PC-9 (cell line): ENCODE measurements at regions of chr5 and their contacts with region 1.

Region 1: GRCh38 chr5:14156650-14157493 is 13.7 kb downstream of the TRIO start:
- DNase-seq: peak; percentile 83 to 99
- H3K4me3 ChIP-seq: peak overlapping the region; percentile 45; the same call in 1 of the 2 replicates
- H3K27ac ChIP-seq: peak overlapping the region; percentile 87
- H3K4me1 ChIP-seq: peaks cover 76% of the 10 kb centered on the region
- H3K27me3 ChIP-seq: no peaks in the 10 kb centered on the region
- CTCF ChIP-seq: no peak; the same call in 1 of the 2 replicates

Region 2: GRCh38 chr5:12743582-12743981 is 1413.3 kb before region 1 on chr5:
- CTCF ChIA-PET with region 1: no interaction called
- POLR2A ChIA-PET with region 1: no interaction called
- intact Hi-C with region 1: no loop called
- DNase-seq: no peak
- H3K4me3 ChIP-seq: no peak overlapping the region
- H3K27ac ChIP-seq: no peak overlapping the region
- H3K4me1 ChIP-seq: no peaks in the 10 kb centered on the region
- H3K27me3 ChIP-seq: no peaks in the 10 kb centered on the region
- CTCF ChIP-seq: no peak

Region 3: DNA sequence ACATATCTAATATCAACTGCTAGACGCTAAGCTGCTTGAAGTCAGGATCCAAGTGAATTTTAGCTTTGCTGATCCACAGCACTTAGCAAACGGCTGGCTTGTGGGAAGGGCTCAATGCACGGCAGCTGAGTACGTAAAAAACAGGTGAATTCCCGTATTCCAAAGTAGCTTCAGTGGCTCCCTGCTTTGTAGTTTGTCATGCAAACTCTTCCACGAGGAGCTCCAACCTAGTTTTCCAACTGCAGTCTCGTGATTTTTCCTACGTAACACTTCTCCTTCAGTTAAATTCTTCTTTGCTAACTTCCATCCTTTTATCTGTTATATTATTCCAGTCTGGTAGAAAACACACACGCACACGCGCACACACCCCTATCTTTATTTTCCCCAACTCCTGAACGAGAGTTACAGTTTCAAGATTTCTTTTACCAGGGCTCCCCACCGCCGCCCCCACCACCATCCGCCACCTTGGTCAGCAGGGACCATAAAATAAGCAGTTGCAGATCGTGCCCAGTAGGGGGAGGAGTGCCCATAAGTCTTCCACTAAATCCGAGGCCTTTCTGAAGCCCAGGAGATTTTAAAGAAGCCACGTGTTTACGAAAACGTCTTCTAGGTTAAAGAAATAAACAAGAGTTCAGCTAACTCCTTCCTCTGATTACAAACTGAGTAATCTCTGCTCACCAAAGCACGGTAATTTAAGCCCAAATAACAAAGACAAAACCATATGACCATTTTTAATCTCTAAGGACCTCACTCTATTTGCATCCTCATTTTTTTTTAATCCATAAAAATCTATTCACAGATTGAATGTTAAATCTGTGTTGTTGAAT is 48.5 kb before region 1 on chr5:
- CTCF ChIA-PET with region 1: no interaction called
- POLR2A ChIA-PET with region 1: interaction called, 6 read pairs
- intact Hi-C with region 1: loop called (anchors 1 kb)
- DNase-seq: peak in 1 of 2 experiments; percentile 81
- H3K4me3 ChIP-seq: no peak overlapping the region
- H3K27ac ChIP-seq: peak overlapping the region; percentile 22; the same call in 1 of the 2 replicates
- H3K4me1 ChIP-seq: peaks cover 10% of the 10 kb centered on the region
- H3K27me3 ChIP-seq: no peaks in the 10 kb centered on the region
- CTCF ChIP-seq: peak; percentile 59

Region 4: DNA sequence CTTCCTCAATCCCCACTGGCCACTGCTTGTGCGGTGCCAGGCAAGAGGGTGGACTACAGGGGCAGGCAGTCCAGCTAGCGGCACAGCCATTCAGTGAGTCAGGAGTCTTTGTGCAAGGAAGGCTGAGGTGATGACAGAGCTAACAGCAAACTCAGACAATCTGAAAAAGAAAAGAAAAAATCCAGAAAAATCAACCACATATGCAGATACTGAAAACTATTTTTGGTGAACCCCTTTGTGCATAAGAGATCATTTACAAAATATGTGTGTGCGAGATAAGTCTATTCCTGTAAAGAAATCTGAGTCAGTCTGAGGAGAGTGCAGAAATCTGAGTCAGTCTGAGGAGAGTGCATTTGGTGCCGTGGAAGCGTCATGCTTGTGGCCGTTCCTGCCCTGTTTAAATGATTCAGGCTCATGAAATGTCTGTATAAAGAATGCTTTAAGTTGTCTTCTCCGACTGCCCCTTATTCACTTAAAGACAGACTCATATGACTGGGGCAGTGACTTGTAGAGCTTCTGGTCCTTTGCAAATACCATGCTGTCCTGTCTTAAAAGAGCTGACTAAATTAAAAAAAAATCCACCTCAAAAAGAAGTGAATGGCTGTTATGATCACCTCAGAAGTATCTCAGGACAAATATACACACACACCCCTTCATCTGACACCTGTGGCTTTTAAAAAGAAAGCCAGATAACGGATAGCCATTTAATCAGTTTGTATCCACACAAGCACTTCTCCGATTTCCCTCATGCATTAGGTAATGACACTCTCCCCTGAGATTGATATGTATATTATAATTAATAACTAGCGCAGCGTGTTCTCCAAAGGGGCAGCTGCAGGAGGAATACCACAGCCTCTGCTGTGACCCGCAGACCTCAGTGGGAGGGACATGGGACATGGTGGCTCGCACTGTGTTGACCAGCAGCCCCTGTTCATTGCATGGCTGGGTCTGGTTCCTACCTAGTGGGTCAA is 33.6 kb after region 1 on chr5:
- CTCF ChIA-PET with region 1: interaction called, 12 read pairs
- POLR2A ChIA-PET with region 1: interaction called, 12 read pairs
- intact Hi-C with region 1: loop called (anchors 1 kb)
- DNase-seq: peak; percentile 87 to 98
- H3K4me3 ChIP-seq: peak overlapping the region; percentile 30; the same call in 1 of the 2 replicates
- H3K27ac ChIP-seq: peak overlapping the region; percentile 92
- H3K4me1 ChIP-seq: peaks cover 79% of the 10 kb centered on the region
- H3K27me3 ChIP-seq: no peaks in the 10 kb centered on the region
- CTCF ChIP-seq: no peak

Region 5: DNA sequence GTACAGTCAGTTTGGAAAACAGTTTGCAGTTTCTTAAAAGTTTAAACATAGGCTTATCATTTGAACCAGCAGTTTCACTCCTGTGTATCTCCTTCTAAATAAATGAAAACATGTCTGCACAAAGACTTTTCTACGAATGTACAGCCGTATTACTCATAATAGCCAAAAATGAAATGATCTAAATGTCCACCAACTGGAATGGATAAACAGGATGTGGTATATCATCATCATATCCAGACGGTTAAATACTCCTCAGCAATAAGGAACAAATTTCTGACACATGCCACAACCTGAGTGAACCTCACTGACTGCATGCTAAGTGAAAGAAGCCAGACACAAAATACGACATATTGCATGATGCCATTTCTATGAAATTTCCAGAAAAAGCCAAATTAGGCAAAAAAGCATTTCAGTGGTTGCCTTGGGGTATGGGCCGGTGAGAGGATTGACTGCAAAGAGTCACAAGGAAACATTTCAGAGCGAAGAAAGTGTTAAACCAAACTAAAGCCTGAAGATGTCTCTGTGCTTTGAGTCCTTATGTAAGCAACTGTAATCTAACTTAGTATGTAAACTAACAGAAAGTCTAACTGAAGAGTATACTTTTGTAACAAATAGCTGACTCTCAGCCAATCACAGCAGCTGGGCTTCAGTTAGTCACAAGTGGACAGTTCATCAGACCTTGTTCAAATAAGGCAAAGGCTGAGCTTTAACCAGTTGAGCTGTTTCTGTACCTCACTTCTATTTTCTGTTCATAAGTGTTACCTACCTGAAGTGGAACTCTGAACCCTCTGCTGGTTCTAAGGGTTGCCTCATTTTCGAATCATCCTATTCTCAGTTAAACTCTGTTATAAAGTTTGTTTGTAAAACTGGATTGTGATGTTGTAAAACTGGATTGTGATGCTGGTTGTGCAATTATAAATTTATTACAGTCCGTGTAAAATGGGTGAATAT is 51.5 kb after region 1 on chr5:
- CTCF ChIA-PET with region 1: no interaction called
- POLR2A ChIA-PET with region 1: interaction called, 10 read pairs
- intact Hi-C with region 1: no loop called
- DNase-seq: peak in 1 of 2 experiments; percentile 34
- H3K4me3 ChIP-seq: no peak overlapping the region
- H3K27ac ChIP-seq: peak overlapping the region; percentile 21; the same call in 1 of the 2 replicates
- H3K4me1 ChIP-seq: peaks cover 23% of the 10 kb centered on the region
- H3K27me3 ChIP-seq: no peaks in the 10 kb centered on the region
- CTCF ChIP-seq: no peak

Region 6: GRCh38 chr5:14264604-14265316 is 107.9 kb after region 1 on chr5:
- CTCF ChIA-PET with region 1: interaction called, 22 read pairs
- POLR2A ChIA-PET with region 1: interaction called, 28 read pairs
- intact Hi-C with region 1: no loop called
- DNase-seq: peak; percentile 90 to 99
- H3K4me3 ChIP-seq: peak overlapping the region; percentile 52
- H3K27ac ChIP-seq: peak overlapping the region; percentile 88
- H3K4me1 ChIP-seq: peaks cover 62% of the 10 kb centered on the region
- H3K27me3 ChIP-seq: no peaks in the 10 kb centered on the region
- CTCF ChIP-seq: no peak

Region 7: DNA sequence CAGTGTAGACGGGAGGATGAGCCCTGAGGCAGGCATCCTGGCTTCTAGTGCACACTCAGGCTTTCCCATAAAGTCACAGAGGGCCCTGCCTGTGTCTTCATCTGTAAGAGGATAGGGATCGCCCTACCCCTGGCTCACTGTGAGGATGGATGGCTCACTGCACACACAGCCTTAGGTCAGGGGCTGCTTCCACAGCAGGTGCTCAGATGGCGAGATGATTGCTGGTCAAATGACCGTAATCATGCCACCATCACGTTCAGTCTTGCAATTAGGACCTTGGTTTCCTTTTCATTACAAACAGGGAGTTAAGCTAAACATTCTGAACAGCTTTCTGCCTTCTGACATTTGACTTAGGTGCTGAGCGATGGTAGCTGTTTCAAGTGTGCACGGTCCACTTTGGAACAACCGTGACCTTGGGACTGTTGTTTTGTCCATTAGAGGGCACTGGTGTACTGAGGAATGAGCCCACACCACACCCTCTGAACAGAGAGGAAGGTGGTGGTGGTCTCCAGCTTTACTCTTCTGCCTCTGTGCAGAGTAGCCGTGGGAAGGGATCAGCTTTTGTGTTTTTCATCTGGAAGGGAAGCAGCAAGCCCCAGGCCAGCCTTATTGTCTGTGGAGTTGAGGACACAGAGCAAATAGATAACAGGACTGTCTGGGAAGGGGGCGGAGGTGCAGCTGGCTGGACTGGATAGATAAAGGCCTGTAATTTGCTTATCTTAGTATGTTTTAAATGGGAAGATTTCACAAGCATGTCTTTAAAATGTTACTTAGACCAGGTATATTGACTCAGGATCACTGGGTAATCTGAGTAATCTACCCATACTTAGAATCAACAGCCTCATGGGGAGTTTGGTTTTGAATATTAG is 169.4 kb after region 1 on chr5:
- CTCF ChIA-PET with region 1: no interaction called
- POLR2A ChIA-PET with region 1: no interaction called
- intact Hi-C with region 1: no loop called
- DNase-seq: no peak
- H3K4me3 ChIP-seq: no peak overlapping the region
- H3K27ac ChIP-seq: no peak overlapping the region
- H3K4me1 ChIP-seq: no peaks in the 10 kb centered on the region
- H3K27me3 ChIP-seq: no peaks in the 10 kb centered on the region
- CTCF ChIP-seq: no peak

Region 8: DNA sequence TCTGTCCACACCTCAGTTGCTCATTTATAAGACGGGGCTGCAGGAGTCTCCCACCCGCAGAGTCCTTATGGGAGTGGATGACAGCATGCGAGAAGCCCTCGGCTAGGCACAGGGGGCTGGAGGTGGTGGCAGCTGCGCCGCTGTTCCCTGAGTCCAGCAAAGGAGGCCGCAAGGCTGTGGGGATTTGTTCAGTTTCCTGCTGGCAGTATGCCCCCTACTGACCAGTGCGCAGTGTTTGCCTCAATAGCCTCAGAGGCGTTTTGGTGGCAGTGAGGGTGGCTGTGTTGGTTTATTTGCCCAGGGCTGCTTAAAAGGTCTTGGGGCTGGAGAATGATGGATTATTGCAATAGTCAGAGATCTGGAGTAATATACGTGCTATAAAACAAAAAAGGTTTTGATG is 248.4 kb after region 1 on chr5:
- CTCF ChIA-PET with region 1: no interaction called
- POLR2A ChIA-PET with region 1: no interaction called
- intact Hi-C with region 1: loop called (anchors 5 kb)
- DNase-seq: peak in 1 of 2 experiments; percentile 73
- H3K4me3 ChIP-seq: no peak overlapping the region
- H3K27ac ChIP-seq: no peak overlapping the region
- H3K4me1 ChIP-seq: no peaks in the 10 kb centered on the region
- H3K27me3 ChIP-seq: no peaks in the 10 kb centered on the region
- CTCF ChIP-seq: 0 out of 2 replicates have a peak, but pooled peaks have one; percentile 34